ENCODE measurements at regions of chr7 and their contacts with region 1.

Region 1: DNA sequence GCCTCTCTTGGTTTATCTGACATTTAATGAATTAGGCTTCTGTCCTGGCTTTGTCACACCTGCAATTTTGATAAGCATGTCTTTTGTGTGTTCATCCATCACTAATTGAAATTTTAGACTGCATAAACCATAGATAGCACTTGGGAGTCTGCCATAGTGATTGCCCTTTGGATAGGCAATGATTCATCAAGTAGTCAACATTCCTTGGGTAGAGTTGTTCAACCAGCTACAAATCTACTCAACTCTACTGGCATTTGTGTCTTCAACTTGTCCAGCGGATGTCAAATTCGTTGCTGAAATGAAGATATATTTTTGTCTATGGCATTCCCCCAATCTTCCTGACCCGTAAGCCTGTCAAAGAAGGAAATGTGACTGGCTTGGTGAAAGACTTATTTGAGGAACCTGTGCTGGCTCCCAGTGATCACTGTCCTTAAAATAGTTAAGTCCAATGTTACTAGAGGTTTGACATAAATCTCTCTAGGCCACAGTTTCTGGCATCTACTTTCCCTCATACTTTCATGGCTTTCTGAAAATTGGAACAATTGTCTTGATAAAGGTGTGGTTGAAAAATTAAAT is 33.7 kb upstream of the CREB5 start:
- DNase-seq: no peak
- CTCF ChIP-seq: no peak

Region 2: GRCh38 chr7:28358423-28358868 is 20.2 kb before region 1 on chr7:
- CTCF ChIA-PET with region 1: interaction called, 15 read pairs
- POLR2A ChIA-PET with region 1: no interaction called
- DNase-seq: no peak
- CTCF ChIP-seq: no peak

Region 3: DNA sequence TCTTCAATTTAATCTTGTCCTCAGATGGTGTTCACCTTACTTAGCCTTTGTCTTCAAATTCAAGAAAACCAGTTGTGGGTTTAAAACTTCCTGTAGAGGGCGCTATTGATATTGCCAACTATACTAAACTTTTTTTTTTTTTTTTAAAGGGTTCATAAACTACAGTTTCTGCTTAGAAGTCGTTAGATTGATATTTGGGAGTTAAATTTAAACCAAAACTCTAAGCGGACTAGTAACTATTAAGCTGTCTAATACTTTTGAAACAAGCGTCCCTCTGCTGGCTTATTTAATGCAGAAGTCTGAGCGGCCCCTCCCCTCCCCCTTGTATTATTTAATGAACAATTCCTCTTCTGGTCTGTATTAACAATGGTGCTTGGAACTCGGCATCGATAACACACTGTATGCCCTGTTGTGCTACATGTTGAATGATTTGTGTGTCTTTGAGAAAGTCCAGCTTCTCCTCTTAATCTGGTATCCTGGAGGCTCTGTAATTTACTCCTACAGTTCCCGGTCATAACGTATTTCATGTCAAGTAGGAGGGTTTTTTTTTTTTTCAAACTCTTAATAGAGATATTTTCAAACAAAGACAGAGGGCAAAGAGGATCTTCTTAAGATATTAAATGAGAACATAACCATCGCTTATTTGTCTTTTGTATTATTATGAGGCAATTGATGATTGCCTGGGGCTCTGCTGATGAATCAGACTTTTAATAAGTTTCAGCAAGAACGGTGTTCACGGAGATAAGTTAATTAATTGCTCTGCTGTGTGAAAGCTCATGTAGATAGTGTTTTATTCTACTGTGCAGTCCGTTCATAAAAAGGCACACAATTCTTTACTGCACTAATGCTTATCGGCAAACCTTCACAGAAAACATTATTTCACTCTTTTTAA is 11.1 kb after region 1 on chr7:
- CTCF ChIA-PET with region 1: interaction called, 15 read pairs
- POLR2A ChIA-PET with region 1: no interaction called
- DNase-seq: peak; percentile 22
- CTCF ChIP-seq: peak; percentile 62

Measured in GM10248 (cell line).